HEK293 (cell line): ENCODE measurements at regions of chr1 and their contacts with region 1.

Region 1: DNA sequence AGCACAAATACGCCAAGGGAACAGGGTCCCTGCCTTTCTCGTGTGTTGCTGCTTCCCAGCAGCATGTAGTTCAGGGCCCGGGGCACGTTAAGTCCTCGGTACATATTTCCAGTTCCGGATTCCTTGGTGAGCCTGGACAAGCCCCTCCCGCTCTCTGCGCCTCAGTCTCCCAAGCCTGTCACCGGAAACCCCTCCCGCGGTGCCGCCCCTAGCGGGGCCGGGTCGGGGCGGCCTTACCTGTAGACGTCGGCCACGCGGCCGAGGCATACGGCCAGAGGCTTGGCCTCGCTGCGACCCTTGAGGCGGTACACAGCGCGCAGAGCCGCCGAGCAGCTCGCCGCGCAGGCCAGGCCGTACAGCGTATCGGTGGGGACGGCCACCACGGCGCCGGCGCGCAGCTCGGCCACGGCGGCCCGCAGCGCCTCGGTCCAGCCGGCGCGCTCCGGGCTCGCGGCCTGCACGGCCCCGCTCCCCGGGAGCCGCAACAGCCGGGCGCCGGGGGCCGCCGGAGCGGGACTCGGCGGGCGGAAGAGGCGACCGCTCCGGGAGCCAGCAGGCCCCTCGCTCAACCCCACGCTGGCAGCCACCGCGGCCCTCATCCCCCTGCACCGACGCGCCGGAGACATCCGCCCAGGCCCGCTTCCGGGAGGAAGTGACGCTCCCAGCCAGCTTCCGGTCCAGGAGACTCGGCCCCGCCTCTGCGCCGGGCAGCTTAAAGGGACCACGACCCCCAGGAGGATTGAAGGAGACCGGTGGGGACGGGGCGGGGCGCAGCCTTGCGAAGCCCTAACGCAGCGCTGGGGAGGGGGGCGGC is at the starts of genes C1orf122 and YRDC:
- H3K4me3 ChIP-seq: peak within 1 kb of the TSS; percentile 91
- H3K27ac ChIP-seq: peak within 1 kb of the TSS; percentile 65
- H3K4me1 ChIP-seq: peaks cover 3% of the 10 kb centered on the region; the same call in 1 of the 2 replicates
- CTCF ChIP-seq: no peak

Region 2: DNA sequence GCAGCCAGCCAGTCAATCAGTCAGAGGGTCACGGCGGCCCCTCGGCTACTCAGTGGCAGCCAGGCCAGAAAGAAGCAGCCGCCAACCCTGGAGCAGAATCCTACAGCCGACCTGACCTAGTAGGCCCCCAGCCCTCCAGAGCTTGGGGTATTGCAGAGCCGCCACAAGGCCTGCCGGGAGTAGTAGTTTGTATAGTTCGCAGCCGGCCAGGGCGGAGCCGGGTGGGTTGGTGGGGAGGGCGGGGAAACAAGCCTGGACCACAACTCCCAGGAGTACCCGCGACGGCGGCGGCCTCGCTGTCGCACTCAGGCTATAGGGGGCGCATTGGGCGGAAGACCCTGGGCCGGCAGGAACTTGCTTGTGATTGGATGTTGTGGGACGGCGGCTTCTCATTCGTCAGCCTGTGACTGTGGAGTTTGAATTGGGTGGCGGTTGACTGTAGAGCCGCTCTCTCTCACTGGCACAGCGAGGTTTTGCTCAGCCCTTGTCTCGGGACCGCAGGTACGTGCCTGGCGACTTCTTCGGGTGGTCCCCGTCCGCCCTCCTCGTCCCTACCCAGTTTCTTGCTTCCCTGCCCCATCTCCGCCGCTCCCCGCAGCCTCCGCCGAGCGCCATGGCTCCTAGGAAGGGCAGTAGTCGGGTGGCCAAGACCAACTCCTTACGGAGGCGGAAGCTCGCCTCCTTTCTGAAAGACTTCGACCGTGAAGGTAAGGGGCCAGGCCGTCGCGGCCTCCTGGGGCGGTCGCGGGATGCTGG is 115.5 kb before region 1 on chr1 and contains the start of gene CDCA8:
- CTCF ChIA-PET with region 1: interaction called, 3 read pairs
- POLR2A ChIA-PET with region 1: interaction called, 50 read pairs
- H3K4me3 ChIP-seq: peak within 1 kb of the TSS; percentile 96
- H3K27ac ChIP-seq: peak within 1 kb of the TSS; percentile 77
- H3K4me1 ChIP-seq: peaks cover 6% of the 10 kb centered on the region; the same call in 1 of the 2 replicates
- CTCF ChIP-seq: peak; percentile 93

Region 3: GRCh38 chr1:37704966-37705365 is 102.8 kb before region 1 on chr1:
- CTCF ChIA-PET with region 1: interaction called, 4 read pairs
- POLR2A ChIA-PET with region 1: interaction called, 11 read pairs
- H3K4me3 ChIP-seq: no peak overlapping the region
- H3K27ac ChIP-seq: no peak overlapping the region
- H3K4me1 ChIP-seq: no peaks in the 10 kb centered on the region
- CTCF ChIP-seq: no peak

Region 4: DNA sequence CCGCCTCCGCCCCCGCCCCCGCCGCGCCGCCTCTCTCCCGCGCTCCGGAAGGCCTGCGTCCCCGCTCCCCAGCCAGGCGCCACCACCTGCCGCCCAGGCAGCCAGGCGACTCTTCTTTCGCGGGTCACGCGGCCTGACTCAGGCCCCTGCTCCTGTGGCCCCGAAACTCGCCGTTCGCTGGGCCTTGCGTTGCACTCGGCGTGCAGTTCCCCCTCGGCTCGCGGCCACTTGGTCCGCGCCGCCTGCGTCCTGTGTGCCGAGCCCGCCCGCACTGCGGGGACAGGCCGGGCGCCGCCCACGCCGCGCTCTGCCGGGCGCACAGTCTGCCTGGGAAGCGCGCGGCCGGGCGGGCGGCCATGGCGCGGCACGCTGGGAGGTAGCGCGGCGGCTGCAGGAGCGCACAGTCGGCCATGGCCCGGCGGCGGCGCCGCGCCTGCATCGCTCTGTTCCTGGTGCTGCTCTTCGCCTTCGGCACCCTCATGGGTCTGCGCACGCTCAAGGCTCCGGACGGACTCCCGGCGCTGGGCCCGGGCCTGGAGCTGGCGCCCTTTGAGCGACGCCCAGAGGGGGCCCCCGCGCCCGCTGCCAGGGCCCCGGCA is 13.9 kb before region 1 on chr1 and contains the start of gene MANEAL:
- CTCF ChIA-PET with region 1: interaction called, 4 read pairs
- POLR2A ChIA-PET with region 1: interaction called, 17 read pairs
- H3K4me3 ChIP-seq: peak within 1 kb of the TSS; percentile 70
- H3K27ac ChIP-seq: peak within 1 kb of the TSS; percentile 88; the same call in 1 of the 2 replicates
- H3K4me1 ChIP-seq: peaks cover 7% of the 10 kb centered on the region; the same call in 1 of the 2 replicates
- CTCF ChIP-seq: 0 out of 2 replicates have a peak, but pooled peaks have one; percentile 40

Region 5: GRCh38 chr1:37822906-37823815 is 15.4 kb after region 1 on chr1:
- CTCF ChIA-PET with region 1: interaction called, 5 read pairs
- POLR2A ChIA-PET with region 1: interaction called, 10 read pairs
- H3K4me3 ChIP-seq: no peak overlapping the region
- H3K27ac ChIP-seq: no peak overlapping the region
- H3K4me1 ChIP-seq: no peaks in the 10 kb centered on the region
- CTCF ChIP-seq: no peak

Region 6: DNA sequence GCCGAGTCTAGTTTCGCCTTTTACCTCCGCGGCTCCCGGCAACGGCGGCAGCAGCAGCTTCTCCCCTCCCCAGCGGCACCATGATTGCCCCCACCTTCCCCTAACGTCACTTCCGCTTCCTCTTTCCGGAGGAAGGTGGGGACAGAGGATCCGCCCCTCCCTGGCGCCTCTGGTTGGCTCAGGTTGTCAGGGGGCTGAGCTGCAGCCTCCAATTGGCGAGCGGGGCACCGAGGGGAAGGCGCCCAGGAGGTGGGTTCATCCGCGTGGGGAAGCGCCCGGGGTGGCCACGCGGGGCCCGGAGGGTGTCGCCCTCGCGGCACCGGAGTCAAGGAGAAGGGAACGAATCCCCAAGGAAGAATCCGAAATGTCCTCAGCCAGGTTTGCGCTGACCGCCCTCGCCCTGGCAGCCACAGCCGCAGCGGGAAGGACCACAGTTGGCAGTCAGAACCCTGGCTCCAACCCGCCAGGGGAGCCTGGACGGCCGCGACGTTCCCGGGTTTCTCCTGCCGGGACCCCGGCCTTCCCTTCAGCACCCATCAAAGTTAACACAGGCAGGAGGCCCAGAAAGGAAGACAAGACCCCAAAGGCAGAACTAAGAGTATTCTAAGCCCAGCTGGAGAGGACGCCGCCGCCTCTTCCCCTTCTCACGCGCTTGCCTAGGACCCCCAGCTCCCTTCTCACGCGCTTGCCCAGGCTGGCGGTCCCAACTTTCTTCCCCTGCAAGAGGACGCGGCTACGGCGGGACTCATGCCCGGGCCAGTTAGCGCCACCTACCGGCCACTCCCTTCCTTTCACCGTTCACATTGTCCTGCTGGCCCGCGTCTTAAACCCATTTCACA is 52.0 kb after region 1 on chr1 and contains the start of gene MTF1:
- CTCF ChIA-PET with region 1: interaction called, 10 read pairs
- POLR2A ChIA-PET with region 1: interaction called, 26 read pairs
- H3K4me3 ChIP-seq: peak within 1 kb of the TSS; percentile 100
- H3K27ac ChIP-seq: peak within 1 kb of the TSS; percentile 47; the same call in 1 of the 2 replicates
- H3K4me1 ChIP-seq: no peaks in the 10 kb centered on the region
- CTCF ChIP-seq: peak; percentile 93

Region 7: DNA sequence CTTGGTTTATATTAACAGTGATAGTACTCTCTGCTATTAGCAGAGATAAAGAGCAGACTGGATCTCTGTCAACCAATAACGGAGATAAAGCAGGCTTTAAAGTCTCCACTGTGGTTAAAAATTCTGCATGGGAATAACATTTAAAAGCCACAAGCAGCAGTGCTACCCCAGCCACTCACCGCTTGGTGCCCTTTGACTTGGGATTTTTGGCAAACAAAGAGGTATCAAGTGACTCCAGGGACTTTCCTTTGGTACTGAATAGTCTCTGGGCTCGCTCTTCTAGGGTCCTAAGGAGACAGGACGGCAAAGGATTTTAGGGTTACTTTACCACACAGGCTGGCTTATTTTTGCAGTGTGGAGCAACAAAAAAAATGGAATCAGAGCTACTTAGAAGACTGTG is 170.8 kb after region 1 on chr1:
- CTCF ChIA-PET with region 1: no interaction called
- POLR2A ChIA-PET with region 1: interaction called, 10 read pairs
- H3K4me3 ChIP-seq: no peak overlapping the region
- H3K27ac ChIP-seq: no peak overlapping the region
- H3K4me1 ChIP-seq: no peaks in the 10 kb centered on the region
- CTCF ChIP-seq: no peak